H1 (cell line): ENCODE measurements at regions of chr20 and their contacts with region 1.

Region 1: GRCh38 chr20:63858393-63859165 is 2.7 kb upstream of the ABHD16B start:
- DNase-seq: peak in 1 of 2 experiments; percentile 67
- H3K4me3 ChIP-seq: peak overlapping the region in 2 of 4 experiments; percentile 14 to 29; a peak in 3 of 8 replicates
- H3K27ac ChIP-seq: no peak overlapping the region; the same call in 1 of the 2 replicates
- H3K4me1 ChIP-seq: peaks cover 7 to 49% (median 43%) of the 10 kb centered on the region in 4 experiments
- H3K27me3 ChIP-seq: no peaks in the 10 kb centered on the region
- CTCF ChIP-seq: peak; percentile 36 to 58 (median 54)
- EP300 ChIP-seq: peak in 1 of 2 experiments; percentile 21; a peak in 1 of 3 replicates
- POLR2A ChIP-seq: no peak
- RAD21 ChIP-seq: peak; percentile 51 to 61; a peak in 3 of 4 replicates

Region 2: DNA sequence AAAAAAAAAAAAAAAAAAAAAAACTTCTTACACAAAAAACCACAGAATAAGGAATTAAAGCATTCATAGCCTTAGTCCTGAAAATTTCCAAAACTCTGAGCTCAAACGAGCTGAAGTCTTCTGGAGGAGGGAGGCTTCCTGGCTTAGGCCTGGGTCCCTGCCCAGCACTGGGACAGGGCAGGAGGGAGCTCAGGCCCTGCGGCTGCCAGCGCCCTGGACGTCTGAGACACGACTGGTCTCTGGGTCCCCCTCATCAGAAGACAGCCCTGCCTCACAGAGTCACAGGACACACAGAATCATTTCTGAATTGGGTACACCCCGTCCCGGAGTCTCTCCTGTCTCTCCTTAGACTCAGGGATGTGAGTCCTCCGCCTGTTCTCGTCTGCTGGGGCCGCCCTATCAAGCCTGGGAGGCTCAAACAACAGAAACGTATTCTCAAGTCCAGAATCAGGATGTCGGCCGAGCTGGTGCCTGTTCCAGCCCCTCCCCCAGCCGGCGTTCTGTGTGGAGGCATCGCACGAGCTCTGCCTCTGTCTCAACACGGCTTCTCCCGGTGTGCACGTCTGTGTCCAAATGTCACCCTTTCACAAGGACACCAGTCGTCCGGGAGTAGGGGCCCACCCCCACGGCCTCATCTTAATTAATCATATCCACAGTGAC is 67.0 kb before region 1 on chr20:
- CTCF ChIA-PET with region 1: interaction called, 19 read pairs
- POLR2A ChIA-PET with region 1: interaction called, 6 read pairs
- DNase-seq: no peak
- H3K4me3 ChIP-seq: no peak overlapping the region
- H3K27ac ChIP-seq: no peak overlapping the region
- H3K4me1 ChIP-seq: no peaks in the 10 kb centered on the region; a peak in 1 of 7 replicates
- H3K27me3 ChIP-seq: no peaks in the 10 kb centered on the region
- CTCF ChIP-seq: no peak
- EP300 ChIP-seq: no peak
- POLR2A ChIP-seq: no peak
- RAD21 ChIP-seq: no peak

Region 3: GRCh38 chr20:63836458-63837344 is 21.9 kb before region 1 on chr20:
- CTCF ChIA-PET with region 1: interaction called, 10 read pairs
- POLR2A ChIA-PET with region 1: interaction called, 3 read pairs
- DNase-seq: no peak
- H3K4me3 ChIP-seq: no peak overlapping the region
- H3K27ac ChIP-seq: no peak overlapping the region
- H3K4me1 ChIP-seq: peaks cover 0 to 29% (median 16%) of the 10 kb centered on the region in 4 experiments; a peak in 6 of 7 replicates
- H3K27me3 ChIP-seq: peaks cover 13 to 20% (median 15%) of the 10 kb centered on the region in 4 experiments; a peak in 6 of 7 replicates
- CTCF ChIP-seq: no peak
- EP300 ChIP-seq: no peak
- POLR2A ChIP-seq: no peak
- RAD21 ChIP-seq: no peak

Region 4: GRCh38 chr20:63846128-63846798 is 12.3 kb before region 1 on chr20:
- CTCF ChIA-PET with region 1: interaction called, 14 read pairs
- POLR2A ChIA-PET with region 1: interaction called, 52 read pairs
- DNase-seq: peak in 1 of 2 experiments; percentile 80
- H3K4me3 ChIP-seq: peak overlapping the region; percentile 25 to 60 (median 37)
- H3K27ac ChIP-seq: peak overlapping the region; percentile 49; the same call in 1 of the 2 replicates
- H3K4me1 ChIP-seq: peaks cover 6 to 29% (median 23%) of the 10 kb centered on the region in 4 experiments
- H3K27me3 ChIP-seq: no peaks in the 10 kb centered on the region
- CTCF ChIP-seq: no peak
- EP300 ChIP-seq: no peak
- POLR2A ChIP-seq: peak in 1 of 2 experiments; percentile 63; a peak in 1 of 3 replicates
- RAD21 ChIP-seq: no peak; a peak in 1 of 4 replicates